ENCODE measurements at regions of chr3 and their contacts with region 1.

Region 1: GRCh38 chr3:50088725-50089608 is at the start of gene RBM5:
- DNase-seq: peak; percentile 93
- H3K4me3 Mint-ChIP-seq: peak within 1 kb of the TSS; percentile 92
- H3K27ac Mint-ChIP-seq: peak within 1 kb of the TSS; percentile 99
- H3K4me1 Mint-ChIP-seq: peaks cover 10% of the 10 kb centered on the region
- H3K27me3 Mint-ChIP-seq: no peaks in the 10 kb centered on the region
- CTCF ChIP-seq: no peak
- total RNA-seq, gene RBM5: 138 TPM in 2 replicates

Region 2: GRCh38 chr3:50154840-50155474 is 66.0 kb after region 1 on chr3 and contains the start of gene SEMA3F:
- CTCF ChIA-PET with region 1: no interaction called
- POLR2A ChIA-PET with region 1: interaction called, 10 read pairs
- intact Hi-C with region 1: no loop called
- DNase-seq: peak; percentile 78
- H3K4me3 Mint-ChIP-seq: peak within 1 kb of the TSS; percentile 84
- H3K27ac Mint-ChIP-seq: peak within 1 kb of the TSS; percentile 61
- H3K4me1 Mint-ChIP-seq: peaks cover 63% of the 10 kb centered on the region
- H3K27me3 Mint-ChIP-seq: no peaks in the 10 kb centered on the region
- CTCF ChIP-seq: peak; percentile 44
- total RNA-seq, gene SEMA3F: 34.6 and 51.5 TPM in 2 replicates

Measured in MCF 10A (cell line).